B cell (primary cell): ENCODE measurements at regions of chr2 and their contacts with region 1.

Region 1: DNA sequence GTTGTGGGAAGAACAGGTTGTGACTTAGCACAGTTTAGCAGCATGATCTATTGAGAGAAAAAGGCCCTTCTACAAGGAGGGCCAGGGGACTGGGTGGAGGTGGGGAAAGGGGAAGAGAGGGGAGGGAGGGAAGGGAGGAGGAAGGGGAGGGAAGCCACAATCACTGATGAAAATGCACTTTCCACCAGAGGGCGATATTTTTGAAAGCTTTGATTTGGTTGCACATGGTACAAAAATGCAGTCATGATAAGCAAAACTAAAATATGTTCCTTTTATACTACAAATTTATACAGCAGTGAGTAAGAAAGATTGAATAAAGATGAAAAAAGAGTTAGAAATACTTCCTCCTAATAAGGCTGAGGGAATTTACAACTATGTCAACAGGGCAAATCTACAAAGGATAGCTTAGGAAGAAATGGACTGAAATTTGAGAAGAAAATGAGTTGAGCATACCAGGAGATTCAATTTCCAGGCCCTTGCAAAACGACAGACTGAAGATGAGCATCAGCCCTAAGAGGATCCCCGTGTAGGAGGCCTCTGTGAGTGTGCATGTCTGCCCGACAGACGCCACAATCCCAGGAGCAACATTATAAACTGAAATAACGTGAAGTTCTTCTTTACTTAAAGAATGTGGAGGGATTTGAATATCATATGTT is 17.2 kb downstream of the SH3YL1 start:
- DNase-seq: peak; percentile 71
- ATAC-seq: peak; percentile 51
- H3K4me3 ChIP-seq: no peak overlapping the region
- H3K4me3 Mint-ChIP-seq: no peak overlapping the region
- H3K27ac ChIP-seq: no peak overlapping the region
- H3K27ac Mint-ChIP-seq: no peak overlapping the region
- H3K4me1 ChIP-seq: peaks cover 0 to 3% of the 10 kb centered on the region in 2 donors
- H3K4me1 Mint-ChIP-seq: peaks cover 4% of the 10 kb centered on the region
- H3K27me3 ChIP-seq: no peaks in the 10 kb centered on the region
- H3K27me3 Mint-ChIP-seq: no peaks in the 10 kb centered on the region
- CTCF ChIP-seq: peak; percentile 78

Region 2: DNA sequence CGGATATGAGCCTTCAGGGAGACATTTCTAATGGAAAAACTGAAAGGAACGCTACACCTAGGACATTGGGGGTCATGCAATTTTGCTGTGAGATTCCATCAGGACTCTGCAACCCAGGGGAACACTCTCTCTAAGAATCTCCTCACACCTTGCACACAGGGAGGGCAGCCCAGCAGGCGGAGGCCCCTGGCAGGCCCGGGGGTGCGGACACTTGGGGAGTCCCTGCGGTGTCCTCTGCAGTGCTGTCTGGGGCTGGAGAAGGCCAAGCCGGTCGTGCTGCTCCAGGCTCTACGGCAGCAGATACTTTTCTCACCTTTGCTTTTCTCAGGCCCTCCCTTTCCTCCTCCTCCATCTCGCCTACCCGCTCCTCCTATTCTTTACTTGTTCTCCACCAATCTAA is 145.6 kb before region 1 on chr2:
- CTCF ChIA-PET with region 1: no interaction called
- POLR2A ChIA-PET with region 1: no interaction called
- intact Hi-C with region 1: no loop called
- DNase-seq: no peak
- ATAC-seq: no peak
- H3K4me3 ChIP-seq: no peak overlapping the region
- H3K4me3 Mint-ChIP-seq: no peak overlapping the region
- H3K27ac ChIP-seq: no peak overlapping the region
- H3K27ac Mint-ChIP-seq: no peak overlapping the region
- H3K4me1 ChIP-seq: no peaks in the 10 kb centered on the region
- H3K4me1 Mint-ChIP-seq: no peaks in the 10 kb centered on the region
- H3K27me3 ChIP-seq: no peaks in the 10 kb centered on the region
- H3K27me3 Mint-ChIP-seq: no peaks in the 10 kb centered on the region
- CTCF ChIP-seq: no peak

Region 3: GRCh38 chr2:133675-134593 is 112.7 kb before region 1 on chr2:
- CTCF ChIA-PET with region 1: no interaction called
- POLR2A ChIA-PET with region 1: no interaction called
- intact Hi-C with region 1: no loop called
- DNase-seq: no peak
- ATAC-seq: no peak
- H3K4me3 ChIP-seq: no peak overlapping the region
- H3K4me3 Mint-ChIP-seq: no peak overlapping the region
- H3K27ac ChIP-seq: no peak overlapping the region
- H3K27ac Mint-ChIP-seq: no peak overlapping the region
- H3K4me1 ChIP-seq: no peaks in the 10 kb centered on the region
- H3K4me1 Mint-ChIP-seq: no peaks in the 10 kb centered on the region
- H3K27me3 ChIP-seq: peaks cover 0 to 5% (median 0%) of the 10 kb centered on the region in 4 experiments
- H3K27me3 Mint-ChIP-seq: peaks cover 27% of the 10 kb centered on the region
- CTCF ChIP-seq: no peak

Region 4: DNA sequence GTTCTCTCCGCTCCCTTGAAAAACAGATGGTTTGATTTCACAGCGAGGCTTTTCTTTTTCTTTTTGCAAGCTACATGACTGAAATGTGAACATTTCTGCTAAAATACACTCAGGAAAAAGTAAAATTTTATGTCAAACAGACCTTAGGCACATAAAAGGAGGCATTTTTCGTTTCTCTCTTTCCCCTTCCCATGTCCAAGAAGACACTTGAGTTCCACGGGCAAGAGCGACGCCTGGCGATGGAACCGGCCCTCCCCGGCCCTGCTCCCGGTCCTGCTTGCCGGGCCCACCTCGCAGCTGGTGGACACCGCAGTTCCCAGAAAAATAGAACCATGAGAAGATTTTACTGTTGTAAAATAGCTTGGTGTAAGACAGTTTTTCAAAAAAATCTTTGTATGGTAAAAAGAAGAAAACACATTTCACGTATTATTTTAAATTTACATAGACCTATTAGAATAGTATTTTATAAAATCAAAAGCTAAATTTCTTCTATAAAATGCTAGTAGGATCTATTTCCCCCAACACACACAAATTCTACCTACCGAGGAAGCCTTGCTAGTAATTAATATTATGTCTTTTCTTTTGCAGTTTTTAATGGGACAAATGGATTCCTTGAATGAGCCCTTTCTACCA is 43.6 kb after region 1 on chr2:
- CTCF ChIA-PET with region 1: interaction called, 7 read pairs
- POLR2A ChIA-PET with region 1: no interaction called
- intact Hi-C with region 1: loop called (anchors 1 kb)
- DNase-seq: peak; percentile 52
- ATAC-seq: no peak
- H3K4me3 ChIP-seq: peak overlapping the region in 3 of 5 experiments; percentile 27 to 50 (median 44)
- H3K4me3 Mint-ChIP-seq: peak overlapping the region; percentile 83
- H3K27ac ChIP-seq: no peak overlapping the region
- H3K27ac Mint-ChIP-seq: no peak overlapping the region
- H3K4me1 ChIP-seq: peaks cover 13 to 20% of the 10 kb centered on the region in 2 donors
- H3K4me1 Mint-ChIP-seq: peaks cover 13% of the 10 kb centered on the region
- H3K27me3 ChIP-seq: peaks cover 0 to 28% (median 19%) of the 10 kb centered on the region in 4 experiments
- H3K27me3 Mint-ChIP-seq: peaks cover 33% of the 10 kb centered on the region
- CTCF ChIP-seq: peak; percentile 18

Region 5: DNA sequence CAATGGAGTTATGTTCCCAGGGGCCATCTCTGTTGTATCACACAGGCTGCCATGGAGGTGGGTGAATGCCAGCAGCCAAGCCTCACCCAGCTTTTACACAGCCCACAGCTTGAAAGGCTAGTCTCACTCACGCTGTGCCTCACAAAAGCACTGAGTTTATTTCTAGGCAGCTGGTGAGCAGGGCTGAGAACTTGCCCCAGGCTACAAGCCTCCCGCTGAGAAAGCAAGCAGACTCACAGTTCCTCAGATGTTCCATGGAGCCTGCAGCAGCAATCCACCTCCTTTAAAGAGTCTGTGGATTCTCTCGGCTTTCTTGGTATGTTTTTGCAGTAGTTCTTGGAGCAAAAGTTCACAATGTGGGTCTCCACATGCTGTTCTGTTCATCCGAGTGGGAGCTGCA is 82.1 kb after region 1 on chr2:
- CTCF ChIA-PET with region 1: no interaction called
- POLR2A ChIA-PET with region 1: no interaction called
- intact Hi-C with region 1: no loop called
- DNase-seq: no peak
- ATAC-seq: no peak
- H3K4me3 ChIP-seq: no peak overlapping the region
- H3K4me3 Mint-ChIP-seq: no peak overlapping the region
- H3K27ac ChIP-seq: no peak overlapping the region
- H3K27ac Mint-ChIP-seq: no peak overlapping the region
- H3K4me1 ChIP-seq: no peaks in the 10 kb centered on the region
- H3K4me1 Mint-ChIP-seq: no peaks in the 10 kb centered on the region
- H3K27me3 ChIP-seq: peaks cover 0 to 8% (median 3%) of the 10 kb centered on the region in 4 experiments
- H3K27me3 Mint-ChIP-seq: peaks cover 20% of the 10 kb centered on the region
- CTCF ChIP-seq: no peak

Region 6: DNA sequence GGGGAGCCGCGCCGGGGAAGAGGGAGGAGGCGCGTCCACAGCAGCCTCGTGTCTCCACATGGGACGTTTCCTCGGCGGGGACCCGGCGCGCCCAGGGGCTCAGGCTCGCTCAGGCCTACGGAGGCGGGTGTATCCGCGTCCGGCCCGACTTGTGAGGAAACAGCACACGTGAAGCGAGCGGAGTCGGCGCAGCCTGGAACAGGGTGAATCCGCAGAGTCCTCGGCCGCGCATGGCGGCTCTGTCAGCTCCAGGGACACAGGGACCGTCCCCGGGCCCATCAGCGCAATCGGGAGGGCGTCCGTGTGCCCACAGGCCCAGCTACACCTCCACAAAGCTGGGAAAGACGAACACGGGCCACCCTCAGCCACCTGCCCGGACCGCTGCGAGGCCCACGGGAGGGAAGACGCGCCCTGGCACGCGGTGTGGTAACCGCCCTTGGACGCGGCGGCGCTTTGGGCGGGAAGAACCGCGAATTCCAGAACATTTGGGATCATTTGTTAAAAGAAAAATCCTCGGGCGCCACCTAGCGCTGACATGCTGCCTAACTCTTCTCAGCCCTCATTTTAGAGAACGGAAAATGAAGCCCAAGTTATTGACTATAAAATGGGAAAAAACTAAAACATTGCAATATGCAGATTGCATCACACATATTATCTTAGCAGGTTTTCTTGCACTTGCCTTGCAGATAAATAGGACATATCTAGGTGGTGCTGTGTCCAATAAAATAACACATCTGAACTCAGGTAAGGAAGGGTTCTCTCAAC is 390.2 kb after region 1 on chr2:
- CTCF ChIA-PET with region 1: interaction called, 96 read pairs
- POLR2A ChIA-PET with region 1: no interaction called
- intact Hi-C with region 1: loop called (anchors 1 kb)
- DNase-seq: peak; percentile 72
- ATAC-seq: peak; percentile 70
- H3K4me3 ChIP-seq: peak overlapping the region in 4 of 5 experiments; percentile 49 to 65 (median 56)
- H3K4me3 Mint-ChIP-seq: peak overlapping the region; percentile 92
- H3K27ac ChIP-seq: peak overlapping the region in 1 of 2 donors; percentile 43
- H3K27ac Mint-ChIP-seq: peak overlapping the region; percentile 80
- H3K4me1 ChIP-seq: peaks cover 7 to 8% of the 10 kb centered on the region in 2 donors
- H3K4me1 Mint-ChIP-seq: peaks cover 6% of the 10 kb centered on the region
- H3K27me3 ChIP-seq: peaks cover 0 to 10% (median 0%) of the 10 kb centered on the region in 4 experiments
- H3K27me3 Mint-ChIP-seq: peaks cover 13% of the 10 kb centered on the region
- CTCF ChIP-seq: peak; percentile 99

Region 7: DNA sequence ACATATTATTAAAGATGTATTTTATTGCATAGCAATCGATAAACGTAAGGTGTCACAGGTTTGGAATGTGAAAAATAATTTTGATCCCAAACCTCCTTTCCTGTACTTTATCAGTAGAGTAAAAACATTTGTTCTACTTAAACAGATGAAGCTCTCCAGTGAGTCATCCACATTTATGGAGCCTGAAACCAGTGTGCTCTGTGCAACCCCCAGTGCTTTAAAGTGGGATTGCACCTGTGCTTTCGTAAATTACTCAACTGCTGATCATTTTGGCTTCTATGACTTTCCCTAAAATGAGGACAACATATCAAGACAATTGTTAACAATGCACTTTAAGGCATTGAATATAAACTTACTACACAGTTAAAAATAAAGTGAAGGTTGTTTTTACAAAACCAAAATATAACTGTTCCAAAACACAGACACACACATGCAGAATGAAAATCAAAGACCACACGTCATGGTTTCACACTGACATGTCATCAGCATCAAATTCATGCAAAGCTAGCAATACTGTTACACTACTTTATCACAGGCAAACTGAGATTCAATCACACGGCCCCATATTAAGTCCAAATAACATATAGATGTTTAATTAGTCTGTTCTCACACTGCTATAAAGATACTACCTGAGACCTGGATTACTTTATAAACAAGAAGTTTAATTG is 420.8 kb after region 1 on chr2:
- CTCF ChIA-PET with region 1: no interaction called
- POLR2A ChIA-PET with region 1: no interaction called
- intact Hi-C with region 1: loop called (anchors 1 kb)
- DNase-seq: no peak
- ATAC-seq: peak; percentile 43
- H3K4me3 ChIP-seq: no peak overlapping the region
- H3K4me3 Mint-ChIP-seq: no peak overlapping the region
- H3K27ac ChIP-seq: no peak overlapping the region
- H3K27ac Mint-ChIP-seq: no peak overlapping the region
- H3K4me1 ChIP-seq: peaks cover 1 to 10% of the 10 kb centered on the region in 2 donors
- H3K4me1 Mint-ChIP-seq: peaks cover 10% of the 10 kb centered on the region
- H3K27me3 ChIP-seq: no peaks in the 10 kb centered on the region
- H3K27me3 Mint-ChIP-seq: no peaks in the 10 kb centered on the region
- CTCF ChIP-seq: peak; percentile 43